ENCODE measurements at regions of chrX and their contacts with region 1.

Region 1: GRCh38 chrX:18938710-18939109 is 45.2 kb downstream of the PHKA2 start:
- DNase-seq: no peak
- CTCF ChIP-seq: no peak

Region 2: GRCh38 chrX:19358526-19358925 is 419.8 kb after region 1 on chrX:
- CTCF ChIA-PET with region 1: no interaction called
- POLR2A ChIA-PET with region 1: interaction called, 10 read pairs
- DNase-seq: no peak
- CTCF ChIP-seq: no peak